AG04449 (cell line): ENCODE measurements at regions of chr3 and their contacts with region 1.

Region 1: DNA sequence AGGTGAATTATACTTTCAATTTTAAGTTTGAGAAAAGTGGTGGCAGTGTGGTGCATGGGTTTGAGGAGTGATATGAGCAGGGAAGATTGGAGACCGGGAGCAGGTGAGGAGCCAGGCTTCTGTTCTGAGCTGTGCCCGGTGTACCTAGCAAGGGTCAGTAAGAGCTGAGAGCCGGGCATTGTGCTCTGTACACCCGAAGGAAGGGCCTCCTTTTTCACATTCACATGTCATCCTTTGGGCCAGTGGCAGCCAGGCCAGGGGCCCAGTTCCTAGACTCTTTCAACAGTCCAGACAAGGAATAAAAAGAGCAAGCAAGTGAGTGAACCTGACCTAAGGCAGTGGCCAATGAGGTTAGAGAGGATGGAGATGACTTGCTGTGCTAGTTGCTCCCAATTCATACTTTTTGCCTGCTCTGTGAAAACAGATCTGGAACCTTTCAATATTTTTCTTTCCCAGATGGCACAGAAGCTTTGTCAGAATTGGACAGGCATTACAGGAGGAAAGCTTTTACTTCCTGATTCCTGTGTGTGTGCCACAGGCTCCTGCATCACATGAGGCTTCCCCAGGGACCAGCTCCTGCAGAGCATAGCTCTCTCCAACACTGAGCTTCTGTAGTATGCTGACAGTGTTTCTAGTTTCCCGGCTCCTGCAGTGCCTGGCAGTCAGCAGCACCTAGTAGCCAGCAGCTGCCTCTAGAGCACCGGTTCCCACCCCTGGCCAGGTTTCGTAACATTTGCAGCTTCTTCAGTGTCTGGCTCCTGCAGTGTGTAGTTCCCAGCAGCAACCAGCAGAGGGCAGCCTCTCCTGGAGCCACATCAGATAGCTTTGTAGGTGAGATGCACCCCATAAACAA is 5.3 kb upstream of the TRA2B start:
- DNase-seq: peak; percentile 23
- H3K4me3 ChIP-seq: no peak overlapping the region
- CTCF ChIP-seq: peak; percentile 96

Region 2: GRCh38 chr3:185677146-185677829 is 265.8 kb before region 1 on chr3:
- CTCF ChIA-PET with region 1: interaction called, 10 read pairs
- POLR2A ChIA-PET with region 1: no interaction called
- DNase-seq: no peak
- H3K4me3 ChIP-seq: no peak overlapping the region
- CTCF ChIP-seq: peak; percentile 55

Region 3: DNA sequence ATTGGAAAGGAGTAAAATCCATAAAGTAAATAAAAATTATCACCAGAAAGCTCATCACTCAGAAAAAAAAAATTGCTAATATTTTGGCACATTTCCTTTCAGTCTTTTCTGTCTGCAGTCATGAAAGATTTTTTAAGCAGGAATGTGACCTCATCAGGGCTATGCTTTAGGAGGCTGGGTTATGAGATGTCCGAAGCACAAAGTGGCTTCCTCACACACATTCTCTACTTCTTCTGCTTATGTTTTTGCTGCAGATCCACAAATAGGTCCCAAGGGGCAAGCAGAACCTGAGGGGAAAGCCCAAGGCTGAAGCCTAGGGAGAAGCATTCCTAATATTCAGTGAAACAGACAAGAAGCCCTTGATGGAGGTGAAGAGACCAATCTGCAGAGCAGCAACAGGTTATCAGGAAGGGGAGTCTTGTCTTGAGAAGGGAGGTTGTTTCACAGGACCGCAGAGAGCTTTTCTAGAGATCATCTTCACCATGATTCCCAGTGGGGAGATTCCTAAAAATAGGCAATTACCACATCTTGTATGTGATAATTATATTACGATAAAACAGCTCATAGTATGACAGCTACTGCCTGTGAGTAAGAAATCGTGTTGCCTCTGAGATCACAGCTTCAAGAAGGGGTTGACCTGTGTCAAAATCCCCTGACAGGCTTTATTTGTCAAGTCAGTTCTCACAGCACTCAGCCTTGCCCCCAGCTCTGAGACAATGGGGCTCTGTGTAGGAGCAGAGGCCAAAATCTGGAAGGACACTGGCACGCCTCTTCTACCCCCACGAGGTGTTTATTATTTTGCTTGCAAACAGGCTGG is 178.8 kb before region 1 on chr3:
- CTCF ChIA-PET with region 1: interaction called, 11 read pairs
- POLR2A ChIA-PET with region 1: no interaction called
- DNase-seq: no peak
- H3K4me3 ChIP-seq: no peak overlapping the region
- CTCF ChIP-seq: no peak

Region 4: GRCh38 chr3:185924375-185924774 is 18.8 kb before region 1 on chr3:
- CTCF ChIA-PET with region 1: interaction called, 33 read pairs
- POLR2A ChIA-PET with region 1: no interaction called
- DNase-seq: no peak
- H3K4me3 ChIP-seq: no peak overlapping the region
- CTCF ChIP-seq: no peak

Region 5: DNA sequence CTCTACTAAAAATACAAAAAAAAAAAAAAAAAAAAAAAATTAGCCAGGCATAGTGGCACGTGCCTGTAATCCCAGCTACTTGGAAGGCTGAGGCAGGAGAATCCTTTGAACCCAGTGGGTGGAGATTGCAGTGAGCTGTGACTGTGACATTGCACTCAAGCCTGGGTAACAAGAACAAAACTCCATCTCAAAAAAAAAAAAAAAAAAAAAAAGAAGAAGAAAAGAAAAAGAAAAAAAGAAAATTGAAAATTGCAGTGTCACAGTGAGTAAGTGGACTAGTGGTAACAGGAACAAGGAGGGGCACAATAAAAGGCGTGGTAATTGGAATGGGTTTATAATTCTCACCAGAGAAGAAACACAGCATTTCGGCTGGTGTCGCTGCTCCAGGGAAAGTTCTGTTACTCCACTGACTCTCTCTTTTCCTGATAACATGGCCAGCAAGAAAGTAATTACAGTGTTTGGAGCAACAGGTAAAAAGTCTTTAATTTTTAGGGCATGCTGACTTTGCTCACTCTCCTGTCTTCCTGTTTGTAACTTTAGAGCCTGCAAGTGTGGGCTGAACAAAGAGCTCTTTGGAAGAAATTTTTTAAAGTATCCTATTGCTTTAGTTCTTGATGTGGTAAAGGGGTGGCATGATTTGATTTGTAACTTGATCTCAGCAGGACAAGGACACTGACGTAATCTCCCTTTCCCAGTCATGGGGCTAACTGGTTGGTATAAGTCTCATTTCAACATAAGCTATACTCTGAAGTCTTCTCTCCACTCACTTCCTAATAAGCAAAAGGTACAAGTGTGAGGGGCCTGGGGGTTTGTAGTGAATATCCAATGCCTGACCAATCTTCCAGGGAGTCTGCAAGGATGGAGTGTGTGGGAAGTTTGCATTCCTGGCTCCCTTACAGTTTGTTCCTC is 16.7 kb after region 1 on chr3:
- CTCF ChIA-PET with region 1: interaction called, 172 read pairs
- POLR2A ChIA-PET with region 1: interaction called, 6 read pairs
- DNase-seq: peak; percentile 41
- H3K4me3 ChIP-seq: no peak overlapping the region
- CTCF ChIP-seq: no peak

Region 6: DNA sequence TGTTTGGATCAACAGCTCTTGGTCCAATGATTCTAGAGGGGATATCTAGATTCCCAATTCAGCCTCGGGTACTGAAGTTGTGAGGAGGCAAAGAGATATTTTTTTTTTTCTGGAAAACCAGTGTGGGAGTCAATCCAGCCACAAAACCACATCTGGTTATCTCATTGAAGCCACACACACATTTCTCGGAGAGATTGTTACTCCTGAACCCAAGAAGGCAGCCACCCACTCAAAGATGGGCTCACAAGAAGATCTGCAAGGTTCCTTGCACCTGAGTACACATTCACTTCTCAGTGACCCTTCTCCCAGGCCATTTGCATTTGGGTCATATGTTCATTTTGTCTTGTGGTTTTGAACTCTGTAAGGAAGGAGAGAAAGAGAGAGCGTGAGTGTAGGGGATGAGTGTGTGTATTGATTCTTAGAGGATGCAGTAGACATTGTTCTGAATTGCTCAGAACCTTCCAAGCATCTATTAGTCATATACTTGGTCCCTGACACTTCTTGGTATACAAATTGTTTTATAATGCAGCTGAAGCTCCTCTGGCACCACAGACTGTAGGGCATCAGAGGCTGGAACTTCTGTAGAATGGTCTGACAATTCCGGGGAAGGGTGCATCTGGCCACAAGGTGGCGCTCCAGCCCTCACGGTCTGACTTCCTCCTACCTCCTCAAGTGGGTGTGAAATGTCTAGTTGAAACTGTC is 34.0 kb after region 1 on chr3:
- CTCF ChIA-PET with region 1: interaction called, 31 read pairs
- POLR2A ChIA-PET with region 1: no interaction called
- DNase-seq: no peak
- H3K4me3 ChIP-seq: no peak overlapping the region
- CTCF ChIP-seq: peak; percentile 96

Region 7: GRCh38 chr3:186277268-186277909 is 334.3 kb after region 1 on chr3:
- CTCF ChIA-PET with region 1: interaction called, 61 read pairs
- POLR2A ChIA-PET with region 1: no interaction called
- DNase-seq: no peak
- H3K4me3 ChIP-seq: no peak overlapping the region
- CTCF ChIP-seq: peak; percentile 58